ENCODE measurements at regions of chr10 and their contacts with region 1.

Region 1: GRCh38 chr10:5466418-5467154 is 32.8 kb downstream of the CALML5 start:
- DNase-seq: peak; percentile 91
- H3K4me3 Mint-ChIP-seq: peak overlapping the region; percentile 43
- H3K27ac Mint-ChIP-seq: peak overlapping the region; percentile 78
- H3K4me1 Mint-ChIP-seq: peaks cover 23% of the 10 kb centered on the region
- H3K27me3 Mint-ChIP-seq: no peaks in the 10 kb centered on the region
- CTCF ChIP-seq: no peak

Region 2: DNA sequence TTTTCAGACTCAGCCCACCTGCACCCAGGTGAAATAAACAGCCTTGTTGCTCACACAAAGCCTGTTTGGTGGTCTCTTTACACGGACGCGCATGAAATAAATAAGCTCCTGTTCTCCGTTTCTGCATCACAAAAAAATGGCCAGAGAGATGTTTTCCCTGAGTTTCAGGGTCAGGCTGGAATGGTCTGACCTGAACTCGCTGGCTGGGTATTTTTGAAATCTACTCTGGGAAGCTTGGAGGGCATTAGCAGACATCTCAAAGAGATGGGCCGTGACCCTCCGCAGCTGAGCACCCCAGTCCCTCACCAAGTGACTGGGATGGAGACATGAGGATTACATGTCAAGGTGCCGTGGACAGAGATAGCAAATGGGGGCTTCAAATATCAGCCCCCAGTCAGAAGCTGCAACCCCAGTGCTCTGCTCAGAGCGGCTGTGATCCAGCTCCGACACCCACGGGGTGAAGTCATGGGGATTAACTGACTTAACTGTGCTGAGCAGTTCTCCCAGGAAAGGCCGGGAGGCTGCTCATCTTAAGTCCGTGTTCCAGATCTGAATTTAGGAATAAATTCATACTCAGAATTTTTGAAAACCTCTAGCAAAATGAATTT is 10.4 kb after region 1 on chr10:
- CTCF ChIA-PET with region 1: no interaction called
- POLR2A ChIA-PET with region 1: interaction called, 13 read pairs
- intact Hi-C with region 1: no loop called
- DNase-seq: no peak
- H3K4me3 Mint-ChIP-seq: no peak overlapping the region
- H3K27ac Mint-ChIP-seq: no peak overlapping the region
- H3K4me1 Mint-ChIP-seq: no peaks in the 10 kb centered on the region
- H3K27me3 Mint-ChIP-seq: no peaks in the 10 kb centered on the region
- CTCF ChIP-seq: no peak

Region 3: DNA sequence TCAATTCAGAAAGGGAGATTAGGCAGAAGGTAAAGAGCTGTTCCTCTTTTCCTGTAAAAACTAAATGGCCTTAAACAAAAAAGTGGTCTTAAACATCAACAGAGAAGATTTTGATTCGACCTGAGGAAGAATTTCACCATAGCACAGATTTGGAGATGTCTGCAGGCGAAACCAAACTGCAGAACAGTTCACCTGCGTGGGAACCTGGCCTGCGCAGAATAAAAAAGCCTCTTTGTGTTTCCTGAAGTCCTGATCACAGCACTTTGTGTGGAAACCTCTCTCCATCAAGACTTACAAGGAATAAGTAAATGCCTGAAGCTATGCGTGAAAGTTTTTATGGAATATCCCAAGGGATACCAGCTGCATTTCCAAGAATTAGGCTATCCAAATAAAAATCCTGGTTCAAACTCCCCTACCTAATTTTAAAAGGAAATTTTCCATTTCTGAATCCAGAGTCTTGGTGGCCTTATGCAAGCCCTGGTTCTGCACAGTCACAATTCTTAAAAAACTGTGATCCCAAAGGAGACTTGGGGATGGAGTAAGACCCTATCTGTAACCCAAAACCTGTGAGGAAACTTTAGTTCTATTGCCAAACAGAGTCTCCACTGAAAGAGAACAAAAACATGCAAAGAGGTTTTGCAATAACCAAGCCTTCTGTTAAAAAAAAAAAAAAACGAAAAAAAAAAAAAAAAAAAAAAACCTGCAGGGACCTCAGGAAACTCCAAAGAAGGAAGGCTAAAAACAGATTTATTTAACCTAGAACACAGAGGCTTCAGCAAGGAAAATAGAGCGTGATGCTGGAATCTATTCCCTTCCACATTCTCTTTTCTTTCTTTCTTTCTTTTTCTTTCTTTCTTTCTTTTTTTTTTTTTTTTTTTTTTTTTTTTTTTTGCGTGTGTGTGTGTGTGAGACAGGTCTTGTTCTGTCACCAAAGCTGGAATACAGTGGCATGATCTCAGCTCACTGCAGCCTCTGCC is 68.6 kb after region 1 on chr10:
- CTCF ChIA-PET with region 1: no interaction called
- POLR2A ChIA-PET with region 1: interaction called, 20 read pairs
- intact Hi-C with region 1: loop called (anchors 5 kb)
- DNase-seq: peak; percentile 88
- H3K4me3 Mint-ChIP-seq: peak overlapping the region; percentile 33
- H3K27ac Mint-ChIP-seq: no peak overlapping the region
- H3K4me1 Mint-ChIP-seq: peaks cover 29% of the 10 kb centered on the region
- H3K27me3 Mint-ChIP-seq: no peaks in the 10 kb centered on the region
- CTCF ChIP-seq: no peak

Region 4: DNA sequence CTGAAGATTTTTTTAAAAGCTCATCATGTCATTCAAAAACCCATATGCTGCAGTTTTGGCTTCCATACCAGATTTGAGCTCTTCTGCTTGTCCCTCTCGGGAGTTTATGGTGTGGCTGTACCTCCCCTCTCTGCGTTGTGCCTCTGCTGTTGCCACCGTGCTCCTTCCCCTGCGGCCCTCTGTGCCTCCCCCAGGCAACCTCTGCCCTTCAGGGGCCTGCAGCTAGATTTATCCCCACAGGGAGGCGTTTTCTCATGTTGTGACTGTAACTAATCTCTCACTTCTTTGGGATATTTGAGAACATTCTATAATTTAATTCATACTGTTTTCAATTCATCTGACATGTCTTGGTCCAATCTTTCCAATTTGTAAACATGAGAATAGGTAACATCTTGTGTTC is 270.8 kb after region 1 on chr10:
- CTCF ChIA-PET with region 1: no interaction called
- POLR2A ChIA-PET with region 1: no interaction called
- intact Hi-C with region 1: no loop called
- DNase-seq: no peak
- H3K4me3 Mint-ChIP-seq: no peak overlapping the region
- H3K27ac Mint-ChIP-seq: no peak overlapping the region
- H3K4me1 Mint-ChIP-seq: no peaks in the 10 kb centered on the region
- H3K27me3 Mint-ChIP-seq: no peaks in the 10 kb centered on the region
- CTCF ChIP-seq: no peak